ENCODE measurements at regions of chr5 and their contacts with region 1.

Region 1: DNA sequence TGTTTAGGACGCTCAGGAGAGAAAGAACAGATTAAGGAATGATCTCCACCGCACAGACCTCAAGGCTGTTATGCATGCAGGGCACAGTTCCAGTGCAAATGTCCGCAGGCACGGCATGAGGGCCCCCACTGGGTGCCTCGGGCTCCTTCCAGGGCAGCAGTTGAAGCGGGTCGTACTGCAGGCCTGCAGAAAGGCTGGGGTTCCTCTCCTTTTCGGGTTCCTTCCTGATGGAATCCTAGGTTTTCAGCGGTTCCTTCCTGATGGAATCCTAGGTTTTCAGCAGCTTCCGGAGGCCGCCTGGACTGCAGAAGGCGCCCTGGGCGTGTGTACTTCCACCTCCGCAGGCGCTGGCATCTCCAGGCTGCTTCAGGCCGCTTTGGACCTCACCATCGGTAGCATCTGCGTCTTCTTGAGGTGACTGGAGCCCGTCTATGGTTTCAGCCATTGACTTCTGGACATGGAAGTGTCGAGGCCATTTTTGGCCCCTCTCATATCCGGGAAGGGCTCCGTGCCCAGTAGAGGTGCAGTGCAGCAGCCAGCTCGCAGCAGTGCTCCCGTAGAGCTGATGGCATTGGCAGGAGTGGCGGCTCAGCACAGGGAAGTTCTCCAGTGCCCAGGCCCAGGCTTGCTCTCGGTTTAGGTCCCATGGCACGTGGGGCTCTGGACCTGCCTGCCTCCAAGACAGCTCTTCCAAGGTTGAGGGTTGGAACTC is 5.6 kb upstream of the MGAT4B start:
- DNase-seq: no peak
- CTCF ChIP-seq: no peak

Region 2: DNA sequence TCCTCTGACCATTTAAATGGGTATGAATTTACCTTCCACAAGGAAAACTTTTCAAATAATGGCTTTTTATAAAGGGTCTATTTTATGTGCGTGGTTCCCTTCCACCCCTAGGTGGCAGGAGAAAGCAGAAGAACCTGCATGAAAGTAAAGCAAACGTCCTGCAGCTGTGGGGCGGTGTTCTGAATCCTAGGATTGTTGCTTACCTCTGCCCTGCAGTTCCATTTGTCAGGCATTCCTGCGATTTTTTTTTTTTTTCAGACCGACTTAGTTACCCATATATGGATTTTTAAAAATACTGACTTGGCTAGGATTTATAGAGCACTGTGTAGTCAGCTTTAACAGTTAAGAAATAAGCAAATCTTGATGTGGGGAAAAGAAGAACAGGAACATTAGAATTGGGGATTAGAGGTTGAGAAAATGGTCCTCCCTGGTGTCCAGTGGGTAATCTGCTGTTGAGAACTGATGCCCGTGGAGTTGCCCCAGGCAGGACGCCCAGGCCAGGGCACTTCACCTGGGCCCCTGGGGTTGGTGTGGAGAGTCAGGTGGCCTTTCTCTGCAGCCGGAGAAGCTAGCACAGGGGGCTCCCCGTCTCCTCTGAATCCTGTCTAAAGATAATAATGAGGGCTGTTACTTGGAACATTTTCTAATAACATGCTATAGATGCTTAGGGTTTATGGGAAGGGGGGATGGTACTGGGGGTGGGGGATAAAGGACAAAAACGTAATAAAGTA is 48.9 kb before region 1 on chr5:
- CTCF ChIA-PET with region 1: no interaction called
- POLR2A ChIA-PET with region 1: no interaction called
- DNase-seq: peak; percentile 73
- CTCF ChIP-seq: peak; percentile 84

Region 3: DNA sequence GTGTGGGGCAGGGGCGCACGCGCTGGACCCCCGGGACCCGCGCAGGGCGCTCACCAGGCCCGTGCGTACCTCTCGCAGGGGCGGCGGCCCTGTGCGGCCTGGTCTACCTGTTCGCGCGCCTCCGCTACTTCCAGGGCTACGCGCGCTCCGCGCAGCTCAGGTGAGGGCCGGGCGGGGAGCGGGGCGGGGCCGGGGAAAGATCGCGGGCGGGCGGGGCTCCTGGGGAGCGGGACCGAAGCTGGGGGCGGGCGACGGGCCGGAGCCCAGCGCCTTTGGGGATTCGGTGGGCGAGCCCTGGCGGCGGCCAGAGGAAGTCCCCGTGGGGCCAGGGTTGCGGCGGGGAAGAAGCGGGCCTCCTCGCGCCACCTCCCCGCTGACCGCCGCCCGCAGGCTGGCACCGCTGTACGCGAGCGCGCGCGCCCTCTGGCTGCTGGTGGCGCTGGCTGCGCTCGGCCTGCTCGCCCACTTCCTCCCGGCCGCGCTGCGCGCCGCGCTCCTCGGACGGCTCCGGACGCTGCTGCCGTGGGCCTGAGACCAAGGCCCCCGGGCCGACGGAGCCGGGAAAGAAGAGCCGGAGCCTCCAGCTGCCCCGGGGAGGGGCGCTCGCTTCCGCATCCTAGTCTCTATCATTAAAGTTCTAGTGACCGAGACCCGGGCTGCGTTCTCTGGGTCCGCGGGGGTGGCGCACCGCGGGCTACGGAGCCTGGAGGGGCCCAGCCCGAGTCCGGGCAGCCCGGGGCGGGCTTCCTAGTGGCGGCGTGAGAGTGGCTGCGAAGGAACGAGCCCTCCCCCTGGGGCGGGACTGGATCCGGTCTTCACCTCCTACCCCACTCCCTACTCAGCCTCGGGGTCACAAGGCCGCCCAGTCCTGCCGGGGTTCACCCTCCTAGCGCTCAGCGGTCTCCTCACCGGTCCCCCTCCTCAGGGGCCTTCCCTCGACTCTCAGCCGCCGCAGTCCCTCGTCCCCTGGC is 16.1 kb before region 1 on chr5:
- CTCF ChIA-PET with region 1: interaction called, 10 read pairs
- POLR2A ChIA-PET with region 1: no interaction called
- DNase-seq: peak; percentile 83
- CTCF ChIP-seq: peak; percentile 95

Region 4: DNA sequence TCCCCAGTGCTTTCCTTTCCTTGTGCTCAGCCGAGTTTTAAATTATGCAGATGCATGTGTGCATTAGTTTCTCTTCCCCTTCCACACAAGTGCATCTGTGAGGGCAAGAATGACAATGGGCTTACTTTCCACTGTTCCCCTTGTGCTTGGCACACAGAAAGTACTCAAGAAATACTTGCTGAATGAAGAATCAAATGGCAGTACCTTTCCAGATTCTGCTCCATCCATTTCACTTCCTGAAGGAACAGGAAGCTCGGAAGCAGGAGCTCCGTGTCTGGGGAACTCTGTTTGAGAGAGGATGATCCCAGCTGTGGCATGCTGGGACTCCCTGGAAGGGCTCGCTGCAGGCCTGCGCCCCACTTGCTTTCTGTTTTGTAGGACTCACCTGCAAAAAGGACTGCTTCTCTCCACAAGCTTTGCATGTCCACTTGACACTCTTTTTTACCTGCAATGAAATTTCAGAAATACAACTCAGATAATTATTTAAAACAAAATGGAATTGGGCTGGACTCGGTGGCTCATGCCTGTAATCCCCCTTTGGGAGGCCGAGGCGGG is 40.8 kb after region 1 on chr5:
- CTCF ChIA-PET with region 1: no interaction called
- POLR2A ChIA-PET with region 1: no interaction called
- DNase-seq: peak; percentile 57
- CTCF ChIP-seq: no peak

Measured in GM10248 (cell line).